AG04449 (cell line): ENCODE measurements at regions of chr3 and their contacts with region 1.

Region 1: DNA sequence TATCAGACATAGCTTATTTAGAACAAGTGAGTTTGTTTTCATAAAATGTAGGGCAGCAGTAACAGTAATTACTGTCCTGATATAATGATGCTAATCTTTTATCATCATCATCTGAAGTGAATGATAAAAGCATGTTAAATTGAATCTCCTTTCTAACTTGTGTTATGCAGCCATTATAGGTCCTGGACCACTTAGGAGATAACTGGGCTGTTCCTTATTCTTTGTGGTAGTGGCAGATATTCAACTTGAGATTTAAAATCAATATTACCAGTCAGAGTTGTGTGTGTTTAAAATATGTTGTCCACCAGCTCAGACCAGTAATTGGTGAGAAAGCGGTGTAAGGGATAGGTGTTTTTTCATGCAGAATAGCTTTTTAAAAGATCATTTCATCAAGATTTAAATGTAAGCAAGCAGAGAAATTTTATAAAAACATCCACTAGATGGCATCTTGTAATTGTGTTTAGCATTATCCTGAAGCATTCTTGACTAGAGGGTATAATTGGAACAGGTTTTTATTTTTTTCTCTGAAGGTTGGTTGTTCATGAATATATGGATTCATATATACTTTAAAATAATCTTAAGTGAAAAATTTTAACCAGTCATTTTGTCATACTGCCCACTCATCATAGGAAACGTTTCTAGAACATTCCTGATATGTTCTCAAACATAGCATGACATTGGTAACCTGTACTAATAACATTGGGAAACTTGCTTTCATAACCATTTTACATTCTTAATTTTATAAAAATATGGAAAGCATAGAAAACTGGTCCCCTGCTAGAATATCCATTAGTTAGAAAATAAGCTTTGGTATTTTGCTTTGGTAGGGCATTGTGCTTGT is 153.9 kb downstream of the BBX start:
- DNase-seq: no peak
- H3K4me3 ChIP-seq: no peak overlapping the region
- CTCF ChIP-seq: peak; percentile 29

Region 2: GRCh38 chr3:107543666-107544065 is 133.0 kb before region 1 on chr3:
- CTCF ChIA-PET with region 1: no interaction called
- POLR2A ChIA-PET with region 1: no interaction called
- DNase-seq: no peak
- H3K4me3 ChIP-seq: no peak overlapping the region
- CTCF ChIP-seq: no peak

Region 3: GRCh38 chr3:107734317-107734716 is 57.6 kb after region 1 on chr3:
- CTCF ChIA-PET with region 1: interaction called, 384 read pairs
- POLR2A ChIA-PET with region 1: no interaction called
- DNase-seq: no peak
- H3K4me3 ChIP-seq: no peak overlapping the region
- CTCF ChIP-seq: no peak

Region 4: DNA sequence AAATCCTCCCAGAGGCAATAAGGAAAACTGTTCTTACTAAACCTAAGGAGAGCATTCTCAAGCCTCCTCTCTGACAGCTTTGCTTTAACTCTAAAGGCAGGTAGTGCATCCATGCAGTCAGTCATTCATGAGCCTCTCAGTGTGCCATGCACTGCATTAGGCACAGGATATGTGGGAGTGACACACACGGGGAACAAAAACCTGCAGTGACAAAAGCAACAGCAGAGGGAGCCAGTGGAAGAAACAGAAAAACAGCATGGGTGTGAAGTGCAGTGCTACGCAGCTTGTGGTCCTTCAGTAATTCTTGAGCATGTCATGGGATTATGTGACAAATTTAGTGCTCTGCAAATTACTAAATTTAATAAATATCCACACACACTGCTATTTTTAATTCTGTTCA is 76.8 kb after region 1 on chr3:
- CTCF ChIA-PET with region 1: interaction called, 68 read pairs
- POLR2A ChIA-PET with region 1: no interaction called
- DNase-seq: no peak
- H3K4me3 ChIP-seq: no peak overlapping the region
- CTCF ChIP-seq: peak; percentile 60

Region 5: GRCh38 chr3:107794664-107795443 is 118.2 kb after region 1 on chr3:
- CTCF ChIA-PET with region 1: interaction called, 14 read pairs
- POLR2A ChIA-PET with region 1: no interaction called
- DNase-seq: no peak
- H3K4me3 ChIP-seq: no peak overlapping the region
- CTCF ChIP-seq: no peak

Region 6: DNA sequence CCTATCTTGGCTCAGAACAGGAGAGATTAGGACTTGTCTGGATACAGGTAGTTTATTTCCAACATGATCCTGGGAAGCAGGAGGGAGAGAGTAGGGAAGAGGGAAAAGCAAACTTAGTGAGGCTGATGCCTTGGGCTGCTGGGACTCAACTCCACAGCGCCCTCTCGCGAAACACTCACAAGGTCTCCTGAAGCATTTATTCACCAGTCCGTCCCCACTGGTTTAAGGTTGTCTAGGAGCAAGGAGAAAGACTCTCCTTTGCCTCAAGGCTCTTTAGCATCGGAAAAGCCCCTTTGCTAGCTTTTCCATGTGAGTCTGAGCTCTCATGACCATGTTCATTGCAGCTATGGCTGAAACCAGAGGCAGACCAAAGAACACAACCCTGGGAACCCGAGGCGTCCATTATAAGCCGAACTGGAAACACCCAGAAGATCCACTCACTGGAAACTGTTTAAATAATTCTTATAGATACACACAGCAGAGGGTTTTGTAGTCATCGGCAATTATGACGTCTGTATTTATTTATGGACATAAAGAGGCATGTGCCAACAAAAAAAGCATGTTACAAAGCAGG is 169.7 kb after region 1 on chr3:
- CTCF ChIA-PET with region 1: interaction called, 46 read pairs
- POLR2A ChIA-PET with region 1: no interaction called
- DNase-seq: no peak
- H3K4me3 ChIP-seq: no peak overlapping the region
- CTCF ChIP-seq: peak; percentile 82